Activated CD4-positive, alpha-beta memory T cell treated with anti-CD3 and anti-CD28 coated beads, Interleukin-2, amount 10 ng/mL, durations not matched to agents 7 days and 5 days (primary cell): ENCODE measurements at regions of chr11 and their contacts with region 1.

Region 1: DNA sequence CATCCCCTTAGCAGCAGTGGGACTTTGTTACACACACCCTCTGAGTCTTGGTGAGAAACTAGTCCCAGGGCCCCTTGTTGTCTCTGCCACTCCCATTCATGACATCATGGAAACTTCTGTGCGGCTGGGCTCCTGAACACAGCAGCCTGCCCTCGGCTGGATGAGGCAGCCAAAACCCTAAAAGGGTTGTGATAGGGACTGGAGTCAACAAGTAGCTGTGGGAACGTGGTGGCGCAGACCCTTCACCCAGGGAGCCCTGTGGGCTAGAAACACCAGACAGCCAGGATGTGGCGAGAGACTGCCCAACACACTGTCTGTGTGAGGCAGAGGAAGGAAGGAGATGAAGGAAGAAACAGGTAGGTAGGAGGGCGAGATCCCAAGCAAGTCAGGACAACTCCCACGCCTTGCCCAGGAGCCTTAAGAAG is 3.9 kb downstream of the CD3D start:
- DNase-seq: peak; percentile 93
- H3K4me3 Mint-ChIP-seq: peak overlapping the region; percentile 89
- H3K27ac Mint-ChIP-seq: peak overlapping the region; percentile 99
- H3K4me1 Mint-ChIP-seq: peaks cover 58% of the 10 kb centered on the region
- H3K27me3 Mint-ChIP-seq: no peaks in the 10 kb centered on the region

Region 2: GRCh38 chr11:118227865-118228785 is 110.5 kb before region 1 on chr11:
- CTCF ChIA-PET with region 1: interaction called, 3 read pairs
- POLR2A ChIA-PET with region 1: interaction called, 29 read pairs
- DNase-seq: peak; percentile 63
- H3K4me3 Mint-ChIP-seq: peak overlapping the region; percentile 43
- H3K27ac Mint-ChIP-seq: no peak overlapping the region
- H3K4me1 Mint-ChIP-seq: peaks cover 31% of the 10 kb centered on the region
- H3K27me3 Mint-ChIP-seq: no peaks in the 10 kb centered on the region

Region 3: DNA sequence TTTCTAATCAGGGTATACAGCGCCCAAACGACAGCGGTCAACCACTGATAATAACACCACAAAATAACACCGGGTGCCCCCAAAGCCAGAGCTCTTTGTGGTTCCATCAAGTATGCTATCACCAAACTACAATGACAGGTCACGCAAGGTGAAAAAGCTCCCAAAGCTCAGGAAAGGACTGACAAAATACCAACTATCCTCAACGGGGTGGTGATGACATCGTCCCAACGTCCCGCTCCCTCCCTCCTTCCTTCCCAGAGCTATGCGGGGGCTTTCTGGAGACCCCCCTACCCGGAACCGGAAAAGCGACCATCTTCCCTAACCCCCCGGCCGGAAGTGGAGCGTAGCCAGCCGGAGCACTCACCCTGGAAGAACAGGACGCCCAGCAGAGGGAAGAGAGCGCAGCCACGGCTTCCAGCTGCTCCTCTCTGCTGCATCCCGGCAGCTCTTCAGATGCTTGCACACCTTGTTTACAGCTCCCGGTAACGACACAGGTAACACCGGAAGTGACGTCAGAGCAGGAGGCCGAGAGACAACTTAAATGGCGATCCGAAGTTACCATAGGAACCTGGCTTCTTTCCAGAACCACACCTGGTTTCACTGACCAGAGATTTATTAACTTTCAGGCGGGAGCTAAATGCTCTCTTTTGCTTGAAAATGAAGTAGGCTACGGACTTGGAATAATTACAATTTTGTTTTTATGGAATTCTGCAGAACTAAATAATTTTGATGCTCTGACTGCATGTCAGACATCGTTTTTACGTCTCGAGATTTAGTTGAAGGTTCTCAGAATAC is 86.6 kb before region 1 on chr11 and contains the start of gene MPZL3:
- CTCF ChIA-PET with region 1: interaction called, 4 read pairs
- POLR2A ChIA-PET with region 1: interaction called, 15 read pairs
- DNase-seq: peak; percentile 82
- H3K4me3 Mint-ChIP-seq: peak within 1 kb of the TSS; percentile 93
- H3K27ac Mint-ChIP-seq: peak within 1 kb of the TSS; percentile 93
- H3K4me1 Mint-ChIP-seq: peaks cover 44% of the 10 kb centered on the region
- H3K27me3 Mint-ChIP-seq: no peaks in the 10 kb centered on the region
- total RNA-seq, gene MPZL3: 34.0 to 34.9 TPM

Region 4: GRCh38 chr11:118304568-118305248 is 33.9 kb before region 1 on chr11 and contains the start of gene CD3E:
- CTCF ChIA-PET with region 1: interaction called, 18 read pairs
- POLR2A ChIA-PET with region 1: no interaction called
- DNase-seq: peak; percentile 80
- H3K4me3 Mint-ChIP-seq: peak within 1 kb of the TSS; percentile 99
- H3K27ac Mint-ChIP-seq: peak within 1 kb of the TSS; percentile 99
- H3K4me1 Mint-ChIP-seq: peaks cover 56% of the 10 kb centered on the region
- H3K27me3 Mint-ChIP-seq: no peaks in the 10 kb centered on the region
- total RNA-seq, gene CD3E: 639 to 653 TPM

Region 5: GRCh38 chr11:118353084-118353710 is 14.5 kb after region 1 on chr11:
- CTCF ChIA-PET with region 1: interaction called, 3 read pairs
- POLR2A ChIA-PET with region 1: interaction called, 18 read pairs
- DNase-seq: no peak
- H3K4me3 Mint-ChIP-seq: no peak overlapping the region
- H3K27ac Mint-ChIP-seq: peak overlapping the region; percentile 51
- H3K4me1 Mint-ChIP-seq: peaks cover 20% of the 10 kb centered on the region
- H3K27me3 Mint-ChIP-seq: no peaks in the 10 kb centered on the region

Region 6: GRCh38 chr11:118435893-118436624 is 97.4 kb after region 1 on chr11 and contains the start of gene KMT2A:
- CTCF ChIA-PET with region 1: no interaction called
- POLR2A ChIA-PET with region 1: interaction called, 17 read pairs
- DNase-seq: peak; percentile 93
- H3K4me3 Mint-ChIP-seq: peak within 1 kb of the TSS; percentile 93
- H3K27ac Mint-ChIP-seq: peak within 1 kb of the TSS; percentile 91
- H3K4me1 Mint-ChIP-seq: peaks cover 42% of the 10 kb centered on the region
- H3K27me3 Mint-ChIP-seq: no peaks in the 10 kb centered on the region
- total RNA-seq, gene KMT2A: 94.6 to 102 TPM